ENCODE measurements at regions of chr4 and their contacts with region 1.

Region 1: GRCh38 chr4:52588097-52588782 is 70.9 kb downstream of the USP46 start:
- DNase-seq: peak; percentile 51 to 60
- H3K4me3 ChIP-seq: no peak overlapping the region
- H3K4me3 Mint-ChIP-seq: no peak overlapping the region
- H3K27ac Mint-ChIP-seq: no peak overlapping the region
- H3K4me1 ChIP-seq: peaks cover 6% of the 10 kb centered on the region; the same call in 1 of the 2 replicates
- H3K4me1 Mint-ChIP-seq: peaks cover 15% of the 10 kb centered on the region
- H3K27me3 ChIP-seq: no peaks in the 10 kb centered on the region
- H3K27me3 Mint-ChIP-seq: no peaks in the 10 kb centered on the region
- CTCF ChIP-seq: peak; percentile 49 to 64

Region 2: DNA sequence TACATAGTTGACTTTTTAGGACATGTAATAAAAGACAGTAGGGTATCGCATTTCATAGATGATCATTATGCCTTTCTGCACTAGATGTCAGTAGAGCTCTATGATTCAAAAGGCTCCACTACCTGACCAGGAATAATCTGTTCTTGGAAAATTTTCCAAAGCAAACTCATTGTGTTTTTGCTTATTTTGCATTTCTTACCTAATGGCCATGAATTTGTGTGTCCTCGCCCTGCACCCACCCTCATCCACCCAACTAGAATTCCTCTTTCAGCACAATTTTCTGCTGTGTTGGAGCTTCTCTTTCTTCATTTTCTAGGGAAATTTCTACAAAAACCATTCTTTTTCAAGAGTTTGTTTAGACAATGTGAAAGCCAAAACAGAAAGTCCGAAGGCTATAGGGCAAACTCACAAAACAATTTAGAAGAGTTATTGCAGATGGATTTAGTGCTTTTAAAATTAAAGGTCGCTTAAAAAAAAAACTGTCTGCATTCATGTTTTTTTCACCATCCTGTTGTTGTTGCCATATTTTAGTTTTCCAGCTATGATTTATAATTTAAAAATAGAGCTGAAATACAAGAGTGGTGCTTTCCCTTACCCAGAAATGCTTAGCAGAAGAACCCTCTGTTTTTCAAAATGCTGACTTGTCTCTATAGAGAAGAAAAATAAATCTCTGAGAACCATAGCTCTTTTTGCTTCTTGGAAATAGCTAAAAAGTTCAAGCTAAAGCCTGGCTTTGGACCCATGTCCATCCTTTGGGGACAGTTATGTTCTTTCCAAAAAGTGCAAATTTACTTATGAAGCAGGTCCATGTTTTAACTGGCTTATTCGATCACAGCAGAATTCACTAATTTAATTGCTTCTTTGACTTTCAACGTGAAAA is 353.4 kb before region 1 on chr4:
- CTCF ChIA-PET with region 1: no interaction called
- POLR2A ChIA-PET with region 1: no interaction called
- intact Hi-C with region 1: loop called (anchors 2 kb)
- DNase-seq: peak in 1 of 2 experiments; percentile 34
- H3K4me3 ChIP-seq: no peak overlapping the region
- H3K4me3 Mint-ChIP-seq: no peak overlapping the region
- H3K27ac Mint-ChIP-seq: no peak overlapping the region
- H3K4me1 ChIP-seq: no peaks in the 10 kb centered on the region
- H3K4me1 Mint-ChIP-seq: no peaks in the 10 kb centered on the region
- H3K27me3 ChIP-seq: no peaks in the 10 kb centered on the region
- H3K27me3 Mint-ChIP-seq: peaks cover 8% of the 10 kb centered on the region
- CTCF ChIP-seq: peak; percentile 43 to 57

Region 3: GRCh38 chr4:52477191-52477780 is 111.0 kb before region 1 on chr4:
- CTCF ChIA-PET with region 1: no interaction called
- POLR2A ChIA-PET with region 1: no interaction called
- intact Hi-C with region 1: no loop called
- DNase-seq: no peak
- H3K4me3 ChIP-seq: no peak overlapping the region
- H3K4me3 Mint-ChIP-seq: no peak overlapping the region
- H3K27ac Mint-ChIP-seq: no peak overlapping the region
- H3K4me1 ChIP-seq: no peaks in the 10 kb centered on the region
- H3K4me1 Mint-ChIP-seq: no peaks in the 10 kb centered on the region
- H3K27me3 ChIP-seq: no peaks in the 10 kb centered on the region
- H3K27me3 Mint-ChIP-seq: peaks cover 9% of the 10 kb centered on the region
- CTCF ChIP-seq: no peak

Region 4: DNA sequence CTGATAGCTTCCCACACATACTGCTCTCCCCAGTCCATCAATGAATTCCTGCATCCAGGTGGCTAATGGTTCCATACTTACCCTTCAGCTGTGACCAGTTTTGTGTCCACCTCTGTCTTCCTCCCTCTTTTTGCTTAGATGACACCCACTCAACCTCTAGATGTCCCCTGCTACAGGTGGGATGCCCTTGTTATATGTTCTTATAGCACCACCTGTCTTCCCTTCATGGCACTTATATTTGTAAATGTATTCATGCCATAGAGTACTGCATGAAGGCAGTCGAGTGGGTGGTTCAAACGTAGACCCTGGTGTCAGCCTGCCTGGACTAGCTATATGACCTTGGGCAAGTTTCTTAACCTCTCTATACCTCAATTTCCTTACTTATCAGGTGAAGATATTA is 77.4 kb after region 1 on chr4:
- CTCF ChIA-PET with region 1: interaction called, 4 read pairs
- POLR2A ChIA-PET with region 1: interaction called, 4 read pairs
- intact Hi-C with region 1: loop called (anchors 2 kb)
- DNase-seq: no peak
- H3K4me3 ChIP-seq: no peak overlapping the region
- H3K4me3 Mint-ChIP-seq: no peak overlapping the region
- H3K27ac Mint-ChIP-seq: no peak overlapping the region
- H3K4me1 ChIP-seq: peaks cover 2% of the 10 kb centered on the region; the same call in 1 of the 2 replicates
- H3K4me1 Mint-ChIP-seq: peaks cover 19% of the 10 kb centered on the region
- H3K27me3 ChIP-seq: no peaks in the 10 kb centered on the region
- H3K27me3 Mint-ChIP-seq: peaks cover 6% of the 10 kb centered on the region
- CTCF ChIP-seq: peak in 1 of 2 experiments; percentile 22

Region 5: GRCh38 chr4:52712172-52712990 is 124.1 kb after region 1 on chr4:
- CTCF ChIA-PET with region 1: interaction called, 3 read pairs
- POLR2A ChIA-PET with region 1: no interaction called
- intact Hi-C with region 1: loop called (anchors 2 kb)
- DNase-seq: peak; percentile 98 to 99
- H3K4me3 ChIP-seq: peak overlapping the region; percentile 73
- H3K4me3 Mint-ChIP-seq: peak overlapping the region; percentile 88
- H3K27ac Mint-ChIP-seq: peak overlapping the region; percentile 93
- H3K4me1 ChIP-seq: peaks cover 11% of the 10 kb centered on the region
- H3K4me1 Mint-ChIP-seq: peaks cover 12% of the 10 kb centered on the region
- H3K27me3 ChIP-seq: no peaks in the 10 kb centered on the region
- H3K27me3 Mint-ChIP-seq: peaks cover 3% of the 10 kb centered on the region
- CTCF ChIP-seq: no peak

Region 6: GRCh38 chr4:52911684-52912294 is 323.5 kb after region 1 on chr4:
- CTCF ChIA-PET with region 1: interaction called, 4 read pairs
- POLR2A ChIA-PET with region 1: no interaction called
- intact Hi-C with region 1: loop called (anchors 5 kb)
- DNase-seq: peak; percentile 80 to 82
- H3K4me3 ChIP-seq: no peak overlapping the region
- H3K4me3 Mint-ChIP-seq: no peak overlapping the region
- H3K27ac Mint-ChIP-seq: peak overlapping the region; percentile 39
- H3K4me1 ChIP-seq: peaks cover 58% of the 10 kb centered on the region
- H3K4me1 Mint-ChIP-seq: peaks cover 25% of the 10 kb centered on the region
- H3K27me3 ChIP-seq: no peaks in the 10 kb centered on the region
- H3K27me3 Mint-ChIP-seq: no peaks in the 10 kb centered on the region
- CTCF ChIP-seq: peak; percentile 52 to 67